GM12878 (cell line): ENCODE measurements at regions of chr5 and their contacts with region 1.

Region 1: DNA sequence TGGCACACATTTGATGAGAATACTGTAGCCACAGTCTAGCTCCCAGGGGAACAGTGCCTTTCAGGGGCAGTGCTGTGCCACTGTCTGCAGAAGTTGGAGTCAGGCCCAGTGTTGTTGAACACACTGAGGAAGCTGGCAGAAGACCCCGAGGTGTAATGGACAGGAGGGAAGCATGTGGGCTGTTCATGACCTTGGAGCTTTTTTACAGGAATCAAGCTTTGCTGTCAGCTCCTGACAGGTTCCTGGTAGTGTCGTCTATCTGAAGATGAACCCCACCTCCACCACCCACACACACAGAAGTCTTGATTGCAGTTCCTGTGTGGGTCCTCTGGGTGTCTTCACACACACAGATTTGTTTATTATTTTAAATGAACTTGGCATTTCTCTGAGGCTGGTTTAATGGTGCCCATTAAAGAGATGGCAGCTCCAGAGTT is 40.3 kb upstream of the TNFAIP8 start:
- DNase-seq: peak; percentile 69
- ATAC-seq: peak; percentile 89
- H3K4me3 ChIP-seq: no peak overlapping the region
- H3K27ac ChIP-seq: peak overlapping the region; percentile 68
- H3K4me1 ChIP-seq: peaks cover 64% of the 10 kb centered on the region
- H3K27me3 ChIP-seq: no peaks in the 10 kb centered on the region
- CTCF ChIP-seq: peak; percentile 61 to 73 (median 63); a peak in 5 of 6 replicates
- EP300 ChIP-seq: no peak
- POLR2A ChIP-seq: no peak
- RAD21 ChIP-seq: peak; percentile 87

Region 2: DNA sequence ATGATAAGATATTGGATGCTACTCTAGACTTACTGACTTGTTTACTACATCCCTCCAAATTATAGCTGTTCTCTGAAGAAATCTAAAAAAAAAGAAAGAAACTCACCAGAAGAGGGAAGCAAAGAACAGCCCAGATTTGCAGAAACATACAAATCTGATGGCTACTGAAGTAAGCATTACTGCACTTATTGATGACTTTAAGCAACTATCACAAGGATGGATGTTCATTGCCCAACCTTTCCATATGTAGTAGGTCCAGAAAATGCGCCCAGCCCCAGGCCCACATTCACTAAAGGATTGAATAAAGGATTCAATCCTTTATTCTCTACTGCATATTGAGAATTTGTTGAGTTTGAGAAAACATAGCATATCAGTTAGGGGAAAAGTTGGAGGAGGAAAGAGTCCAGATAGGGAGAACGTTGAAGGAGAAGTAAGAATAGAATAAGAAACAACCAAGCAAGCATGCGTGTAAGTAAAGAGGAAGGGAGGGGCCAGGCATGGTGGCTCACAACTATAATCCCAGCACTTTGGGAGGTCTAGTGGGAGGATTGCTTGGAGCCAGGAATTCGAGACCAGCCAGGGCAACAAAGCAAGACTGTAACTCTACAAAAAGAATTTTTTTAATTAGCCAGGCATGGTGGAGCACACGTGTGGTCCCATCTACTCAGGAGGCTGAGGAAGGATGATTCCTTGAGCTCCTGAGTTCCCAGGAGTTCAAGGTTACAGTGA is 293.4 kb before region 1 on chr5:
- CTCF ChIA-PET with region 1: interaction called, 28 read pairs
- POLR2A ChIA-PET with region 1: interaction called, 4 read pairs
- RAD21 ChIA-PET with region 1: interaction called, 23 read pairs
- SMC1A ChIA-PET with region 1: interaction called, 8 read pairs
- in situ Hi-C with region 1: no loop called
- intact Hi-C with region 1: no loop called
- DNase-seq: no peak
- ATAC-seq: peak; percentile 87
- H3K4me3 ChIP-seq: no peak overlapping the region
- H3K27ac ChIP-seq: no peak overlapping the region
- H3K4me1 ChIP-seq: peaks cover 12% of the 10 kb centered on the region; the same call in 1 of the 2 replicates
- H3K27me3 ChIP-seq: no peaks in the 10 kb centered on the region
- CTCF ChIP-seq: peak; percentile 49 to 69 (median 54); a peak in 5 of 6 replicates
- EP300 ChIP-seq: no peak
- POLR2A ChIP-seq: no peak
- RAD21 ChIP-seq: peak; percentile 92

Region 3: DNA sequence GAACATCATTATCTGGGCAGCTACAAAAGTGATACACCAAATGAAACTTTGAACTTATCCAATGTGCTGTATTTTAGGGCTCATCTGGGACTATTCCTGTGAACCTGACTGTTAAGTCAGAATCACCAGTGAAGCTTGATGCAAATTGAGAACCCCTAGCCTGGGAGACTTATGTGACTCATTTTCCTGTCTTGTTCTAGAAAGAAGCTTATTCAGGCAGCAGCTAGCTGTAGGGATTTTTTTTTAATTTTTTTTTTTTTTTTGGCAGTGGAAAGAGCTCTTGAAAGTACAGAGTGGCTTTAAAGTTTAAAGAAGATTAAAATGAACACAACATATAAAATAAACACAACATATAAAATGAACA is 40.8 kb before region 1 on chr5:
- CTCF ChIA-PET with region 1: interaction called, 32 read pairs
- POLR2A ChIA-PET with region 1: interaction called, 5 read pairs
- RAD21 ChIA-PET with region 1: interaction called, 38 read pairs
- SMC1A ChIA-PET with region 1: interaction called, 79 read pairs
- in situ Hi-C with region 1: no loop called
- intact Hi-C with region 1: no loop called
- DNase-seq: no peak
- ATAC-seq: peak; percentile 23
- H3K4me3 ChIP-seq: peak overlapping the region; percentile 65; the same call in 1 of the 2 replicates
- H3K27ac ChIP-seq: peak overlapping the region; percentile 77
- H3K4me1 ChIP-seq: peaks cover 66% of the 10 kb centered on the region
- H3K27me3 ChIP-seq: no peaks in the 10 kb centered on the region
- CTCF ChIP-seq: no peak
- EP300 ChIP-seq: no peak
- POLR2A ChIP-seq: no peak
- RAD21 ChIP-seq: no peak

Region 4: GRCh38 chr5:119328753-119329602 is 13.4 kb after region 1 on chr5:
- CTCF ChIA-PET with region 1: interaction called, 61 read pairs
- POLR2A ChIA-PET with region 1: interaction called, 13 read pairs
- RAD21 ChIA-PET with region 1: interaction called, 53 read pairs
- SMC1A ChIA-PET with region 1: interaction called, 318 read pairs
- in situ Hi-C with region 1: no loop called
- intact Hi-C with region 1: no loop called
- DNase-seq: no peak
- ATAC-seq: no peak
- H3K4me3 ChIP-seq: no peak overlapping the region
- H3K27ac ChIP-seq: peak overlapping the region; percentile 7; the same call in 1 of the 2 replicates
- H3K4me1 ChIP-seq: peaks cover 48% of the 10 kb centered on the region
- H3K27me3 ChIP-seq: no peaks in the 10 kb centered on the region
- CTCF ChIP-seq: no peak
- EP300 ChIP-seq: no peak
- POLR2A ChIP-seq: no peak
- RAD21 ChIP-seq: no peak

Region 5: GRCh38 chr5:119355685-119356611 is 40.4 kb after region 1 on chr5 and contains the start of gene TNFAIP8:
- CTCF ChIA-PET with region 1: interaction called, 38 read pairs
- POLR2A ChIA-PET with region 1: interaction called, 3 read pairs
- RAD21 ChIA-PET with region 1: interaction called, 56 read pairs
- SMC1A ChIA-PET with region 1: interaction called, 60 read pairs
- in situ Hi-C with region 1: no loop called
- intact Hi-C with region 1: no loop called
- DNase-seq: no peak
- ATAC-seq: peak; percentile 66
- H3K4me3 ChIP-seq: peak within 1 kb of the TSS; percentile 96
- H3K27ac ChIP-seq: peak within 1 kb of the TSS; percentile 92
- H3K4me1 ChIP-seq: peaks cover 40% of the 10 kb centered on the region
- H3K27me3 ChIP-seq: no peaks in the 10 kb centered on the region
- CTCF ChIP-seq: no peak
- EP300 ChIP-seq: peak in 1 of 2 experiments; percentile 61; a peak in 2 of 4 replicates
- POLR2A ChIP-seq: peak; percentile 74
- RAD21 ChIP-seq: peak; percentile 26; the same call in 1 of the 2 replicates
- polyA plus RNA-seq, gene TNFAIP8: 217 to 324 TPM

Region 6: DNA sequence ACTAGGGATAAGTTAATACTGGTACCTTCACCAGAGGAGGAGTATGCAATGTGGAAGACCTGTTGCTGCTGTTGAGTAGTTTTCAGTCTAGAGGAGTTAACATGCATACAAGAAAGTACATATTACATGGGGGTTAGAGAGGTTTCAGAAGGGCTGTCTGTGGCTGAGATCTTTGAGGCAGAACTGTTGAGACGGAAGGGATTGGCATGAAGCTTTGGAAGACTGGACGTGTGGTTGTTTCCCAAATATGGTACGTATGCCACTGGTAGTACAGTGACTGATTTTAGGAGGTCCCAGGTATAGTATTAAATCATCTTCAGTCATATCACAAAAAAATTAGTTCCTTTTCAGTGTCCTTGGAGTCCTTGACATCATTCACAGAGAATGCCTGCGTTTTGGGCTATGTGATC is 57.9 kb after region 1 on chr5:
- CTCF ChIA-PET with region 1: interaction called, 11 read pairs
- POLR2A ChIA-PET with region 1: no interaction called
- RAD21 ChIA-PET with region 1: interaction called, 10 read pairs
- SMC1A ChIA-PET with region 1: interaction called, 12 read pairs
- in situ Hi-C with region 1: no loop called
- intact Hi-C with region 1: no loop called
- DNase-seq: peak; percentile 65
- ATAC-seq: peak; percentile 80
- H3K4me3 ChIP-seq: no peak overlapping the region
- H3K27ac ChIP-seq: peak overlapping the region; percentile 40; the same call in 1 of the 2 replicates
- H3K4me1 ChIP-seq: peaks cover 16% of the 10 kb centered on the region
- H3K27me3 ChIP-seq: no peaks in the 10 kb centered on the region
- CTCF ChIP-seq: no peak
- EP300 ChIP-seq: no peak
- POLR2A ChIP-seq: no peak
- RAD21 ChIP-seq: no peak

Region 7: DNA sequence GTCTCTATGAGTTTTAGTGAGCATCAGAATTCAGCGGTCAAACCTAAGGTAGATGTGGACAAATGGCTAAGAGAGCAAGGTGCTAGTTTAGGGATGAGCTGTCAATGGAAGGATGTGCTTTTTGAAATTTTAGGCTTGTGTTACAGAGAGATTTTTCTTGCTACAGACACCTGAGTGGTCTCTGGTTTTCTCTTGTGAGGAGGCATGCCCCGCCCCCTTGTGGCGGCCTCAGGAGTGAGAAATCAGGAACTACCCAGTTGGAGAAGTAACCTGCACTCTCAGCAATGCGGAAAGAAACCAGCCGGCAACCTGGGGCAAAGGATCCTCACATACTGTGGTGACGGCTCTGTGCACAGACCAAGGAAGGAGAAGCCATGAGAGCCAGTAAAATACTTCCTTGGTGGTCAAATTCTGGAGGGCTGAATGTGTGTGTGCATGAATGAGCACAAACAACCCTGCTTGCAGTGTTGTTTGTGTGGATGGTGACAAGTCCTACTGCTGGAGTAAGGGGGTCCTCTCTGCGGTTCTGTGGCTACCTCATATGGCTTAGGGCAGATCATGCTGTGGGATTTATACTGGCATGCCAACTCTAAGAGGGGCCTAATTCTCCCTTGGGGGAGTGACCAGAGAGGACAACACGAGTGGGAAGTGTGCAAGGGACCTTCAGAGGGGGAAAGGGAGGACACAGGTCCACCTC is 120.1 kb after region 1 on chr5:
- CTCF ChIA-PET with region 1: interaction called, 32 read pairs
- POLR2A ChIA-PET with region 1: interaction called, 4 read pairs
- RAD21 ChIA-PET with region 1: interaction called, 12 read pairs
- SMC1A ChIA-PET with region 1: interaction called, 20 read pairs
- in situ Hi-C with region 1: no loop called
- intact Hi-C with region 1: no loop called
- DNase-seq: peak; percentile 44
- ATAC-seq: peak; percentile 95
- H3K4me3 ChIP-seq: no peak overlapping the region
- H3K27ac ChIP-seq: no peak overlapping the region
- H3K4me1 ChIP-seq: peaks cover 5% of the 10 kb centered on the region; the same call in 1 of the 2 replicates
- H3K27me3 ChIP-seq: no peaks in the 10 kb centered on the region
- CTCF ChIP-seq: peak; percentile 64 to 69 (median 64)
- EP300 ChIP-seq: no peak
- POLR2A ChIP-seq: no peak
- RAD21 ChIP-seq: peak; percentile 75

Region 8: GRCh38 chr5:119614838-119615237 is 299.3 kb after region 1 on chr5:
- CTCF ChIA-PET with region 1: no interaction called
- POLR2A ChIA-PET with region 1: no interaction called
- RAD21 ChIA-PET with region 1: no interaction called
- SMC1A ChIA-PET with region 1: no interaction called
- in situ Hi-C with region 1: no loop called
- intact Hi-C with region 1: no loop called
- DNase-seq: no peak
- ATAC-seq: no peak
- H3K4me3 ChIP-seq: no peak overlapping the region
- H3K27ac ChIP-seq: no peak overlapping the region
- H3K4me1 ChIP-seq: no peaks in the 10 kb centered on the region
- H3K27me3 ChIP-seq: no peaks in the 10 kb centered on the region; a peak in 1 of 4 replicates
- CTCF ChIP-seq: no peak
- EP300 ChIP-seq: no peak
- POLR2A ChIP-seq: no peak
- RAD21 ChIP-seq: no peak